Prostate gland (tissue), 2 donors: ENCODE measurements at regions of chr2 and their contacts with region 1.

Region 1: GRCh38 chr2:163351143-163351542 is 384.7 kb downstream of the FIGN start:
- DNase-seq: no peak
- H3K4me3 ChIP-seq: no peak overlapping the region
- H3K27ac ChIP-seq: no peak overlapping the region
- H3K4me1 ChIP-seq: no peaks in the 10 kb centered on the region
- H3K27me3 ChIP-seq: no peaks in the 10 kb centered on the region
- CTCF ChIP-seq: no peak
- POLR2A ChIP-seq: no peak

Region 2: GRCh38 chr2:163281717-163282116 is 69.4 kb before region 1 on chr2:
- intact Hi-C with region 1: no loop called
- DNase-seq: no peak
- H3K4me3 ChIP-seq: no peak overlapping the region
- H3K27ac ChIP-seq: no peak overlapping the region
- H3K4me1 ChIP-seq: no peaks in the 10 kb centered on the region
- H3K27me3 ChIP-seq: no peaks in the 10 kb centered on the region
- CTCF ChIP-seq: no peak
- POLR2A ChIP-seq: no peak

Region 3: DNA sequence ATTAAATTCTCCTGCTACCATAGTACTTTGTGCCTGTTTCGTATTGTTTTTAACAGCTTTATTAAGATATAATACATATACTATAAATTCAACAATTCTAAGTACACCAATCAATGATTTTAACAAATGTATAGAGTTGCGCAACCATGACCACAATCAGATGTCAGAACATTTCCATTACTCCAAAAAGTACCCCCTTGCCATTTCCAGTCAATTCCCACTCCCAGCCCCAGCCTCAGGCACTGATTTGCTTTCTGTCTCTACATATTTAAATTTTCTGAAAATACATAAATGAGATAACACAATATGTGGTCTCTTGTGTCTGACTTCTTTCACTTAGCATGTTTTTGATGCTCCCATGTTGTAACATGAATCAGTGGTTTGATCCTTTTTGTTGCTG is 190.8 kb after region 1 on chr2:
- intact Hi-C with region 1: no loop called
- DNase-seq: no peak
- H3K4me3 ChIP-seq: no peak overlapping the region
- H3K27ac ChIP-seq: no peak overlapping the region
- H3K4me1 ChIP-seq: no peaks in the 10 kb centered on the region
- H3K27me3 ChIP-seq: no peaks in the 10 kb centered on the region
- CTCF ChIP-seq: no peak
- POLR2A ChIP-seq: no peak

Region 4: GRCh38 chr2:163887182-163887581 is 536.0 kb after region 1 on chr2:
- intact Hi-C with region 1: loop called (anchors 10 kb)
- DNase-seq: no peak
- H3K4me3 ChIP-seq: no peak overlapping the region
- H3K27ac ChIP-seq: no peak overlapping the region
- H3K4me1 ChIP-seq: no peaks in the 10 kb centered on the region
- H3K27me3 ChIP-seq: no peaks in the 10 kb centered on the region
- CTCF ChIP-seq: peak in 2 of 4 experiments; percentile 7 to 38
- POLR2A ChIP-seq: no peak